Left ventricle myocardium superior (tissue), 1 donor: ENCODE measurements at regions of chr2 and their contacts with region 1.

Region 1: GRCh38 chr2:219836647-219837177 is 209.3 kb downstream of the SLC4A3 start:
- DNase-seq: no peak
- ATAC-seq: no peak

Region 2: DNA sequence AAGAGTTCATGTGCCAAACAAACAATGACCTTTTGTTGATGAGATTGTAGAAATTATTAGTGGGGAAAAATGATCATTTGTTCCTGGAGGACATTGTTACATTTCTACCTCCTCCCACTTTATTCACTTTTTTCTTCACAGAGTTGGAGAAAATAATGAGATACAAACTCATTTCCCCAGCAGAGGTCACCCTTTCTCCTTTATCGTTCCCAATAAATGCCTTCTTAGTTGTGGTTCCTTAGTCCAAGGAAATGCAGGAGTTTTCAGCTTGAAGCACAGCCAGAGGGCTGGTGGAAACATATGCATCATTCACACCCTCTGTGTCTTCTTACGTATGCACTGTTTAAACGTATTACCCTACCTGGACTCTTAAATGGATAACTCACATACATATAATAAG is 100.5 kb before region 1 on chr2:
- intact Hi-C with region 1: loop called (anchors 5 kb)
- DNase-seq: no peak
- ATAC-seq: peak; percentile 66

Region 3: GRCh38 chr2:219901155-219901554 is 64.4 kb after region 1 on chr2:
- intact Hi-C with region 1: no loop called
- DNase-seq: no peak
- ATAC-seq: no peak